Naive thymus-derived CD8-positive, alpha-beta T cell (primary cell): ENCODE measurements at regions of chr6 and their contacts with region 1.

Region 1: DNA sequence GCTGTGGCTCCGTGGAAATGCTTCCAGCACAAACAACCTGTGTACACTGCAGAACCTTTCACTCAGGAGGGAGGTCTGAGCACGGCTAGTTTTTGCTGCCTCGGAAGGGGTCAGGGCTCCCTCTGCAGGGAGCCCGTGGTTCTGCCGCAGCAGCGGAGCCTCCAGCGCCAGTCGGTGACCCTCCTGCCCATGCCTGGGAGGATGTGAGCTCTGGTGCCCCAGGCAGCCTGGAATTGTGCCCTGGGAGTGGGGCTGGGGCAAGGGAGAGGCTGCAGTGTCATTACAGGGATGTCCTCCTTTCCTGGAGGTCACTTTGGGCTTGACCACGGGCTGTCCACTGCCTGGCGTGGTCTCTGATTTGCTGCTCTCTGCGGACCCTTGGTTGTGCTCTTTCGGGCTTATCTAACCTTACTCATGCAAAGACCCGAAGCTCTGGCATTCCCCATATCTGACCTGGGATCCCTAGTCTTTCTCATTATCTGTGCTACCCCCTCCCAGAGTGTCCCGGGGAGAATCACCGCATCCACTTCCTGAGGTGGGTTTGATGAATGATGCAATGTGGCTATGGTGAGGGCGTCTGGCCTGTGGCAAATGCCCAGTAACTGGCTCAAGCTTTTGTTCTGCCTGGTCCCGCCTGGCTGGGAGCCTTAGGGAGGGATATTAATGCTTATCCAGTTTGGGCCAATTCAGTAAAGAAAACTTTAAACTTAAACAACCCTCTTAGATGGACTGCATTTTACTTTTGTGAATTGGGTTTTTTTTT is 59.6 kb upstream of the TAGAP start:
- DNase-seq: peak; percentile 62 to 88 (median 74)
- ATAC-seq: peak; percentile 41 to 51
- H3K4me3 Mint-ChIP-seq: peak overlapping the region; percentile 34 to 76 (median 52)
- H3K27ac Mint-ChIP-seq: peak overlapping the region; percentile 86 to 95 (median 90)
- H3K4me1 Mint-ChIP-seq: peaks cover 44 to 92% (median 78%) of the 10 kb centered on the region in 4 donors
- H3K27me3 Mint-ChIP-seq: no peaks in the 10 kb centered on the region

Region 2: DNA sequence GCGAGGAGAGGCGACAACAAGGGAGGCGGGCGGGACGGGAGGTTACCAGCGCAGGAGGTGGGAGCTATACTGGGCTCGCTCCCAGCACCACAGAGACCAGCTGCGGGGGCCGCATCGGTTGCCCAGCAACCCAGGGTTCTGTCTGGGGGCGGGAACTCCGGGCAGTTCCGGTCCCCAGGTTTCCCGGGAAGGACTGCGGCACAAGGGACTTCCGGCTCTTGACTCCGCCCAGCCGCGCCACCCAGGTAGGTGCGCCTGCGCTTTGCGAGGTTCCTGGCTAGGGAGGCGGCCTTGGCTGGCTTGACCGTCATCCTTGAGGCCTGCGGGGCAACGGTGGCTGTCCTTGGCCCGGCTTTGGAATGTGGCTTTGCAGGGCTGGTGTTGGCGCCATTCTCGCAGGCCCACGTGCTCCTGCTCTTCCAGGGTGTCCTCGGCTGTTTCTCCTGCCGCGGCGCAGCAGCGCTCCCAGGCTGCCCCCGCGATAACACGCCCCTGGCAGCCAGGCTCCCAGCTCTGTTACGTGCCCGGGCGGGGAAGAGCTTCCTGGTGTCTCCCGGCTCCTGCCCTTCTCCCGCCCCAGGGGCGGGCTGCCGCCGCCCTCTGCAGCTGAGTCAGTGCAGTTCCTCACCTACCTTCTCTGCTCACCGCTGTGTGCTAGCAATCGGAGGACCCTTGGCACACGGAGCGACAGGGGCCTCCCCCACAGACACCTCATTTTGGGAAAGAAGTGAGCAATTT is 104.5 kb before region 1 on chr6 and contains the start of gene RSPH3:
- POLR2A ChIA-PET with region 1: interaction called, 34 read pairs
- DNase-seq: peak; percentile 80 to 93 (median 83)
- ATAC-seq: peak; percentile 83 to 87
- H3K4me3 Mint-ChIP-seq: peak within 1 kb of the TSS; percentile 92 to 99 (median 97)
- H3K27ac Mint-ChIP-seq: peak within 1 kb of the TSS; percentile 87 to 97 (median 92)
- H3K4me1 Mint-ChIP-seq: peaks cover 20 to 50% (median 23%) of the 10 kb centered on the region in 4 donors
- H3K27me3 Mint-ChIP-seq: no peaks in the 10 kb centered on the region
- polyA plus RNA-seq, gene RSPH3: 1.3 to 2.0 (median 1.8) TPM

Region 3: GRCh38 chr6:159008656-159009288 is 95.6 kb before region 1 on chr6:
- POLR2A ChIA-PET with region 1: interaction called, 55 read pairs
- DNase-seq: peak in 3 of 10 donors; percentile 56 to 64 (median 59)
- ATAC-seq: peak; percentile 47 to 82
- H3K4me3 Mint-ChIP-seq: peak overlapping the region in 2 of 10 donors; percentile 36 to 73
- H3K27ac Mint-ChIP-seq: peak overlapping the region in 2 of 10 donors; percentile 42 to 76
- H3K4me1 Mint-ChIP-seq: peaks cover 6 to 31% (median 20%) of the 10 kb centered on the region in 4 donors
- H3K27me3 Mint-ChIP-seq: no peaks in the 10 kb centered on the region

Region 4: GRCh38 chr6:159062564-159062945 is 41.8 kb before region 1 on chr6:
- POLR2A ChIA-PET with region 1: interaction called, 29 read pairs
- DNase-seq: peak in 9 of 10 donors; percentile 51 to 89 (median 80)
- ATAC-seq: peak; percentile 93 to 94
- H3K4me3 Mint-ChIP-seq: peak overlapping the region; percentile 56 to 84 (median 75)
- H3K27ac Mint-ChIP-seq: peak overlapping the region; percentile 96 to 99 (median 97)
- H3K4me1 Mint-ChIP-seq: peaks cover 43 to 96% (median 85%) of the 10 kb centered on the region in 4 donors
- H3K27me3 Mint-ChIP-seq: no peaks in the 10 kb centered on the region

Region 5: DNA sequence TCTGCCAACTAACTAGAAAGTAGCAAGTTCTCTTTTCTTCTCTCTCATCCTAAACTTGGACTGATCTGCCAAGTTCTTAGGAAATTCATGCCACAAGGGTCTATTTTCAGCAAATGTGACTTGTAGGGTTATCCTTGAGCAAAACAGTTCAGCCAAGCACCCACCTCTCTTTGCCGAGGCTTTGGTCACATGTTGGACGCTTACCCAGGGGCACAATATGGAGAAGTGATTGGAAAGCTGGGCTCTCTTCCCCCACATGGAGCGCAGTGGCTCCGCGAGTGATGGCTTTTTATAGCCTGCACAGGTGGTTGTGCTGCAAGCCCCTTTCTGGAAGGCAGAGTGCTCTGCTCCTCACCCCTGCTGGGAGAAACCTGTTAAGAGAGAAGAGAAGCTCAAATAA is 17.1 kb after region 1 on chr6:
- POLR2A ChIA-PET with region 1: no interaction called
- DNase-seq: no peak
- ATAC-seq: no peak
- H3K4me3 Mint-ChIP-seq: no peak overlapping the region
- H3K27ac Mint-ChIP-seq: no peak overlapping the region
- H3K4me1 Mint-ChIP-seq: peaks cover 3 to 37% (median 5%) of the 10 kb centered on the region in 4 donors
- H3K27me3 Mint-ChIP-seq: no peaks in the 10 kb centered on the region

Region 6: GRCh38 chr6:159169193-159169555 is 64.8 kb after region 1 on chr6 and contains the start of gene FNDC1:
- POLR2A ChIA-PET with region 1: no interaction called
- DNase-seq: peak in 8 of 10 donors; percentile 6 to 54 (median 29)
- ATAC-seq: peak; percentile 66 to 87
- H3K4me3 Mint-ChIP-seq: peak within 1 kb of the TSS; percentile 53 to 78 (median 68)
- H3K27ac Mint-ChIP-seq: no peak within 1 kb of the TSS
- H3K4me1 Mint-ChIP-seq: peaks cover 10 to 25% (median 21%) of the 10 kb centered on the region in 4 donors
- H3K27me3 Mint-ChIP-seq: peaks cover 44 to 96% (median 81%) of the 10 kb centered on the region in 5 donors
- polyA plus RNA-seq, gene FNDC1: not detected

Region 7: GRCh38 chr6:159919011-159919511 is 814.7 kb after region 1 on chr6:
- POLR2A ChIA-PET with region 1: no interaction called
- DNase-seq: no peak
- ATAC-seq: no peak
- H3K4me3 Mint-ChIP-seq: no peak overlapping the region
- H3K27ac Mint-ChIP-seq: no peak overlapping the region
- H3K4me1 Mint-ChIP-seq: no peaks in the 10 kb centered on the region
- H3K27me3 Mint-ChIP-seq: peaks cover 2 to 22% (median 6%) of the 10 kb centered on the region in 5 donors